ENCODE measurements at regions of chr18 and their contacts with region 1.

Region 1: GRCh38 chr18:38611036-38611964 is 1045.7 kb upstream of the CELF4 start:
- DNase-seq: peak; percentile 94
- ATAC-seq: peak; percentile 92
- H3K4me3 ChIP-seq: no peak overlapping the region; the same call in 1 of the 2 replicates
- H3K27ac ChIP-seq: peak overlapping the region; percentile 78
- H3K4me1 ChIP-seq: peaks cover 35% of the 10 kb centered on the region
- H3K27me3 ChIP-seq: no peaks in the 10 kb centered on the region
- CTCF ChIP-seq: no peak; a peak in 1 of 6 replicates
- EP300 ChIP-seq: peak; percentile 49 to 75; a peak in 3 of 4 replicates
- POLR2A ChIP-seq: no peak
- RAD21 ChIP-seq: peak; percentile 54

Region 2: GRCh38 chr18:38170845-38171244 is 440.5 kb before region 1 on chr18:
- CTCF ChIA-PET with region 1: no interaction called
- POLR2A ChIA-PET with region 1: no interaction called
- RAD21 ChIA-PET with region 1: no interaction called
- SMC1A ChIA-PET with region 1: no interaction called
- in situ Hi-C with region 1: no loop called
- intact Hi-C with region 1: no loop called
- DNase-seq: no peak
- ATAC-seq: no peak
- H3K4me3 ChIP-seq: no peak overlapping the region
- H3K27ac ChIP-seq: no peak overlapping the region
- H3K4me1 ChIP-seq: no peaks in the 10 kb centered on the region
- H3K27me3 ChIP-seq: no peaks in the 10 kb centered on the region
- CTCF ChIP-seq: no peak
- EP300 ChIP-seq: no peak
- POLR2A ChIP-seq: no peak
- RAD21 ChIP-seq: no peak

Region 3: GRCh38 chr18:38751898-38752297 is 140.6 kb after region 1 on chr18:
- CTCF ChIA-PET with region 1: no interaction called
- POLR2A ChIA-PET with region 1: no interaction called
- RAD21 ChIA-PET with region 1: no interaction called
- SMC1A ChIA-PET with region 1: no interaction called
- in situ Hi-C with region 1: no loop called
- intact Hi-C with region 1: loop called (anchors 5 kb)
- DNase-seq: no peak
- ATAC-seq: peak; percentile 56
- H3K4me3 ChIP-seq: no peak overlapping the region
- H3K27ac ChIP-seq: no peak overlapping the region
- H3K4me1 ChIP-seq: peaks cover 12% of the 10 kb centered on the region
- H3K27me3 ChIP-seq: no peaks in the 10 kb centered on the region
- CTCF ChIP-seq: no peak
- EP300 ChIP-seq: no peak
- POLR2A ChIP-seq: no peak
- RAD21 ChIP-seq: no peak

Region 4: DNA sequence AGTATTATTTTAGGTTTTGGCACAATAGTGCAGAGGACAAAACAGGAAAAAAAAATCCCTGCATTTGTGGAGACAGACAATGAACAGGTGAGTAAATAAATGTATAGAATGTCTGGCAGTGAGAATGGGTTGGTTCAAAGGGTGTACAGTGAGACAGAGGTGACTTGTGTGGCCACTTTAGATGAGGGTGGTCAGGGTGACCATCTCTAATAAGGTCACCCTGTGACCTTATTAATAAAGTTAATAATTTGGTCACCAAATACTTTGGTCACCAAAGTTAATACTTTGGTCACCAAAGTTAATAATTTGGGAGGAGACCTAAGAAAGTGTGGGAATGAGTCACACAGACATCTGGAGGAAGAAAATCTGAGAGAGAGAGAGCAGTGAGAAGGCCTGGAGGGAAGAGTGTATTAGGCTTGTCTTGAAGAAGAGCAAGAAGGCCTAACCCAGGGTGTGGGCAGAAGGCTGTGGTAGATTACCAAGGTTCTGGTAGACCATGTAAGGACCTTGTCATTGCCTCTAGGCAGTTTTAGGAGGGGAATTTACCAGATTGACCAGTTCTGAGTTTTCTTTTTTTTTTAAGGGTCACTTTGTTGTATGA is 322.7 kb after region 1 on chr18:
- CTCF ChIA-PET with region 1: no interaction called
- POLR2A ChIA-PET with region 1: no interaction called
- RAD21 ChIA-PET with region 1: no interaction called
- SMC1A ChIA-PET with region 1: no interaction called
- in situ Hi-C with region 1: no loop called
- intact Hi-C with region 1: loop called (anchors 2 kb)
- DNase-seq: no peak
- ATAC-seq: peak; percentile 85
- H3K4me3 ChIP-seq: no peak overlapping the region
- H3K27ac ChIP-seq: no peak overlapping the region
- H3K4me1 ChIP-seq: no peaks in the 10 kb centered on the region
- H3K27me3 ChIP-seq: no peaks in the 10 kb centered on the region
- CTCF ChIP-seq: no peak
- EP300 ChIP-seq: no peak
- POLR2A ChIP-seq: no peak
- RAD21 ChIP-seq: no peak

Region 5: DNA sequence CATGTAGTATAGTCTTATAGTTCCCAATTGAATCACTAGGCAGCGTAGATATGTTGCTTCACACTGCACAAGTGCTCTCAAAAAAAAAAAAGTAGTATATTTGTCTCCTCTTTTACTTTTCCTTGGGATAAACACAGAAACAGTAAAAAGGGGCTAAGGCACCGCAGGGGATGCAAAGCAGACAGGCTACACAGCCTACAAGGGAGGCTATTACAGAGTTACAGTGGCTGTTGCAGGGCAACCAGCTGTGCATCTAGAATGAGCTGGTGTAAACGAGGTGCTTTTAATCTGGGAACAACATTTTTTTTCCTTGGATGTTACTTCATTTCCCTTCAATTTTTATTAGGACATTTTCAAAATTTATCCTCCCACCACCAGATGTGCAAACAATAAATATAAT is 889.0 kb after region 1 on chr18:
- CTCF ChIA-PET with region 1: no interaction called
- POLR2A ChIA-PET with region 1: no interaction called
- RAD21 ChIA-PET with region 1: no interaction called
- SMC1A ChIA-PET with region 1: no interaction called
- in situ Hi-C with region 1: no loop called
- intact Hi-C with region 1: loop called (anchors 5 kb)
- DNase-seq: no peak
- ATAC-seq: no peak
- H3K4me3 ChIP-seq: no peak overlapping the region
- H3K27ac ChIP-seq: no peak overlapping the region
- H3K4me1 ChIP-seq: no peaks in the 10 kb centered on the region
- H3K27me3 ChIP-seq: no peaks in the 10 kb centered on the region
- CTCF ChIP-seq: no peak
- EP300 ChIP-seq: no peak
- POLR2A ChIP-seq: no peak
- RAD21 ChIP-seq: no peak

Measured in GM12878 (cell line).